ENCODE measurements at regions of chr15 and their contacts with region 1.

Region 1: GRCh38 chr15:63805993-63806980 is 27.5 kb downstream of the HERC1 start:
- DNase-seq: no peak
- H3K4me3 ChIP-seq: no peak overlapping the region
- H3K27ac ChIP-seq: no peak overlapping the region
- H3K4me1 ChIP-seq: no peaks in the 10 kb centered on the region
- H3K27me3 ChIP-seq: no peaks in the 10 kb centered on the region
- CTCF ChIP-seq: no peak

Region 2: DNA sequence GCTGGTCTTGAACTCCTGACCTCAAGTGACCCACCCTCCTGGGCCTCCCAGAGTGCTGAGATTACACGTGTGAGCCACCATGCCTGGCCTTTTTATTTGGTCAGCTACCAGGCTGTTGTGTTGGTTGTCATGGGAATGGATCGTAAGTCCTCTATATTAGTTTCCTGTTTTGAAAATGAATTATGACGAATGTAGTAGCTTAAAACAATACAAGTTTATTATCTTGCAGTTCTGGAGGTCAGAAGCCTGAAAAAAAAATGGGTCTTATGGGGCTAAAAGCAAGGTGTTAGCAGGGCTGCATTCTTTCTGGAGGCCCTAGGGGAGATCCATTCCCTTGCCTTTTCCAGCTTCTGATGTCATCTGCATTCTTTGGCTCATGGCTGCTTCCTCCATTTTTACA is 52.6 kb after region 1 on chr15:
- intact Hi-C with region 1: loop called (anchors 5 kb)
- DNase-seq: no peak
- H3K4me3 ChIP-seq: no peak overlapping the region
- H3K27ac ChIP-seq: no peak overlapping the region
- H3K4me1 ChIP-seq: peaks cover 0 to 3% of the 10 kb centered on the region in 2 donors
- H3K27me3 ChIP-seq: no peaks in the 10 kb centered on the region
- CTCF ChIP-seq: no peak

Region 3: GRCh38 chr15:64224511-64224910 is 418.2 kb after region 1 on chr15:
- intact Hi-C with region 1: no loop called
- DNase-seq: no peak
- H3K4me3 ChIP-seq: no peak overlapping the region
- H3K27ac ChIP-seq: no peak overlapping the region
- H3K4me1 ChIP-seq: no peaks in the 10 kb centered on the region
- H3K27me3 ChIP-seq: no peaks in the 10 kb centered on the region
- CTCF ChIP-seq: no peak

Measured in ascending aorta (tissue), 2 donors.